A549 (cell line): ENCODE measurements at regions of chr12 and their contacts with region 1.

Region 1: DNA sequence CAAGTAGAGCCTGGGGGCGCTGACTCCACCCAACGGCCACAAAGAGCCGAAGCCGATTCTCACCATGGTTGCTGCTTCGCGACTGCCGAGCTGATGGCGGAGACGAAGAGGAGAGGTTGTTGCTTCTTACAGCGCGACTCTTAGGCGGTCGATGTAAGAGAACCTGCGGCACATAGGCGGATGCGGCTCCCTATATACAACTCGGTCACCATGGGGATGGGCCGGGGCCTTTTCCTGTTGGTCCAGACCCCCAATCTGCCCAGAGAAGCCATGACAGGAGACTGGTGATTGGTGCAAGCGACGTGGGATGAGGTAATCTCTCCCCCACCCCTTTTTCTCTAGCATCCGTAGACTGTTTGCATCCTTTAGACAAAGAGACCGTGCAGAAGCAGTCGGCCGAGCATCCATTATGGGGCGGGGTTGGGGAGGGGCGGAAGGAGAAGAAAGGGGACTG is at the start of gene TUBA1A:
- DNase-seq: peak; percentile 95 to 99
- ATAC-seq: peak; percentile 95
- H3K4me3 ChIP-seq: peak within 1 kb of the TSS; percentile 89
- H3K27ac ChIP-seq: peak within 1 kb of the TSS; percentile 90 to 92
- H3K4me1 ChIP-seq: peaks cover 19% of the 10 kb centered on the region
- CTCF ChIP-seq: no peak
- EP300 ChIP-seq: no peak
- POLR2A ChIP-seq: peak; percentile 99
- RAD21 ChIP-seq: peak in 1 of 2 experiments; percentile 47; a peak in 3 of 5 replicates
- polyA plus RNA-seq, gene TUBA1A: 163 and 231 TPM in 2 replicates

Region 2: GRCh38 chr12:49110464-49111155 is 78.3 kb before region 1 on chr12 and contains the start of gene LMBR1L:
- CTCF ChIA-PET with region 1: interaction called, 3 read pairs
- POLR2A ChIA-PET with region 1: interaction called, 10 read pairs
- DNase-seq: peak; percentile 99 to 100
- ATAC-seq: peak; percentile 98 to 99
- H3K4me3 ChIP-seq: peak within 1 kb of the TSS; percentile 89
- H3K27ac ChIP-seq: peak within 1 kb of the TSS; percentile 79 to 93
- H3K4me1 ChIP-seq: peaks cover 15% of the 10 kb centered on the region
- CTCF ChIP-seq: no peak
- EP300 ChIP-seq: no peak
- POLR2A ChIP-seq: peak; percentile 65
- RAD21 ChIP-seq: no peak
- polyA plus RNA-seq, gene LMBR1L: 25.1 and 35.7 TPM in 2 replicates

Region 3: DNA sequence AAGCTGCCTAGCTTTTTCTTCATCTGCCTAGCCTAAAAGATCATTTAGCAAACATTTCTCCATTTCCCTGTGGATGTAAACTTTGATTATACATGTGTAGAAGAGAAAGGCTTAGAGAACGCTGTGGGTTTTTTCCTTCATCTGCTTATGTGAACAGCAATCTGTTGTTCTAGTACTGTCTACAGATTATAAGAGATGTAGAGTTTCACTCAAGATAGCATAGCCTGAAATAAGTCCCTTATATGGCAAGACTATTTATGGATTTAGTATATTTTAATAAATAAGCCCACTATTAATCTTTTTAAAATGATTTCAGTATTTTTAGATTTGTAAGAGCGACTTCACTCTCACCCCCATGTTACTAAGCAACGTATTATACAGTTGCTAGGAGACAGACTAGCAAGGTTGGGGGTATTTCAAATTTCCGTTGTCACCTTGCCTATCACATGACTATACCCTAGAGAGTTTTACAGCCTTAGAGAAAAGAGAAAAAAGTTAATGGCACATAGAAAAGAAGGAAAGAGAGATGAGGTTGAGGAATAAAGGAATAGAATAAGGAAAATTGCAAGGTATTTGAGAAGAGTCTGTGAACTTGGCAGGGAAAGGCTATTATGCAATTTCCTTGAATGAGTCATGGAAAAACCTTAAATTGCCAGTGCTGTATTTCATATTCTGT is 12.1 kb after region 1 on chr12:
- CTCF ChIA-PET with region 1: interaction called, 5 read pairs
- POLR2A ChIA-PET with region 1: interaction called, 10 read pairs
- DNase-seq: peak; percentile 71 to 84
- ATAC-seq: peak; percentile 81 to 91
- H3K4me3 ChIP-seq: 0 out of 3 replicates have a peak overlapping the region, but pooled peaks have one; percentile 1
- H3K27ac ChIP-seq: peak overlapping the region; percentile 57 to 72; a peak in 5 of 6 replicates
- H3K4me1 ChIP-seq: peaks cover 30% of the 10 kb centered on the region
- CTCF ChIP-seq: no peak
- EP300 ChIP-seq: no peak
- POLR2A ChIP-seq: no peak
- RAD21 ChIP-seq: no peak